ENCODE measurements at regions of chr12 and their contacts with region 1.

Region 1: DNA sequence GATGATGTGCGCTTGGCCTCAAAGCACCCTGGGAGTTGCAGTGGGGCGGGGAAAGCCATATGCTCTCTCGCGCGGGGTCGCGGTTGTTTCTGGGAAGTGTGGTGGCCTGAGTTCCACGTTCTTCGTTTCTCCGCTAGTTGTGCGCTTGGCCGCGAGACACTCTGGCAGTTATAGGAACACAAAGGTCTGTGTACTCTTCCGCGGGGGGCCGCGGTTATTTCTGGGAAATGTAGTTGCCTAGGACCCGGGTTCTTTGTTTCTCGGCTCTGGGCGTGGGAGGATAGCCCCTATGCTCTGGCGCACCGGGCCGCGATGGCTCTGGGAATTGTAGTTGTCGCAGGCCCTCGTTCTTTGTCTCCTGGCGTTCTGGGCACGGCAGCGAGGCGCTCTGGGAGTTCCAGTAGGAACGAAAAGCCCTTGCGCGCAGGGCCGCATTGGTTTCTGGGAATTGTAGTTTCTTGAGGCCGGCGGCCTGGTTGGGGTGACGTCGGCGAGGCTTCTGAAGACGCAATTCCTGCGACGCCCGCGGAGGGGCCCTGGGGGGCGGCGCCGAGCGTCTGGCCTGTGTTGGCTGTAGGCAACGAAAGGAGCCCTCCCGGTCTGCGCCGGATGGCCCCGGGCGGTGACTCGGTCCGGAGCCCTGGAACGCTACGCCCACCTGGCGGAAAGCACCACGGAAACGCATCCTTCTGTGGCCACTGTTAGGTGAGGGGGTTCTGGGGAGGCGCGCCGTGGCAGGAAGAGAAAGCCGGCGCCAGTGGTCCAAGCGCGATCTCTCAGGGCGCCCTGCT is at the start of gene ZNF140:
- DNase-seq: peak; percentile 94
- ATAC-seq: peak; percentile 84
- H3K4me3 ChIP-seq: peak within 1 kb of the TSS; percentile 93 to 96 (median 95)
- H3K27ac ChIP-seq: peak within 1 kb of the TSS; percentile 98
- H3K4me1 ChIP-seq: peaks cover 14% of the 10 kb centered on the region
- H3K27me3 ChIP-seq: no peaks in the 10 kb centered on the region
- CTCF ChIP-seq: no peak; the same call in 1 of the 2 replicates
- EP300 ChIP-seq: no peak
- POLR2A ChIP-seq: peak; percentile 24 to 80
- RAD21 ChIP-seq: peak; percentile 47
- total RNA-seq, gene ZNF140: 13.5 and 20.7 TPM in 2 replicates

Region 2: GRCh38 chr12:132986001-132986912 is 94.3 kb before region 1 on chr12 and contains the start of gene ZNF26:
- CTCF ChIA-PET with region 1: no interaction called
- POLR2A ChIA-PET with region 1: interaction called, 25 read pairs
- in situ Hi-C with region 1: no loop called
- intact Hi-C with region 1: loop called (anchors 2 kb)
- DNase-seq: peak; percentile 90
- ATAC-seq: peak; percentile 98
- H3K4me3 ChIP-seq: peak within 1 kb of the TSS; percentile 83 to 99 (median 96)
- H3K27ac ChIP-seq: peak within 1 kb of the TSS; percentile 60
- H3K4me1 ChIP-seq: peaks cover 17% of the 10 kb centered on the region
- H3K27me3 ChIP-seq: no peaks in the 10 kb centered on the region; a peak in 1 of 5 replicates
- CTCF ChIP-seq: peak; percentile 35; the same call in 1 of the 2 replicates
- EP300 ChIP-seq: 0 out of 4 replicates have a peak, but pooled peaks of 1 of the 2 experiments have one; percentile 57
- POLR2A ChIP-seq: peak; percentile 85 to 89
- RAD21 ChIP-seq: peak; percentile 25; the same call in 1 of the 2 replicates
- total RNA-seq, gene ZNF26: 6.5 and 8.4 TPM in 2 replicates

Region 3: DNA sequence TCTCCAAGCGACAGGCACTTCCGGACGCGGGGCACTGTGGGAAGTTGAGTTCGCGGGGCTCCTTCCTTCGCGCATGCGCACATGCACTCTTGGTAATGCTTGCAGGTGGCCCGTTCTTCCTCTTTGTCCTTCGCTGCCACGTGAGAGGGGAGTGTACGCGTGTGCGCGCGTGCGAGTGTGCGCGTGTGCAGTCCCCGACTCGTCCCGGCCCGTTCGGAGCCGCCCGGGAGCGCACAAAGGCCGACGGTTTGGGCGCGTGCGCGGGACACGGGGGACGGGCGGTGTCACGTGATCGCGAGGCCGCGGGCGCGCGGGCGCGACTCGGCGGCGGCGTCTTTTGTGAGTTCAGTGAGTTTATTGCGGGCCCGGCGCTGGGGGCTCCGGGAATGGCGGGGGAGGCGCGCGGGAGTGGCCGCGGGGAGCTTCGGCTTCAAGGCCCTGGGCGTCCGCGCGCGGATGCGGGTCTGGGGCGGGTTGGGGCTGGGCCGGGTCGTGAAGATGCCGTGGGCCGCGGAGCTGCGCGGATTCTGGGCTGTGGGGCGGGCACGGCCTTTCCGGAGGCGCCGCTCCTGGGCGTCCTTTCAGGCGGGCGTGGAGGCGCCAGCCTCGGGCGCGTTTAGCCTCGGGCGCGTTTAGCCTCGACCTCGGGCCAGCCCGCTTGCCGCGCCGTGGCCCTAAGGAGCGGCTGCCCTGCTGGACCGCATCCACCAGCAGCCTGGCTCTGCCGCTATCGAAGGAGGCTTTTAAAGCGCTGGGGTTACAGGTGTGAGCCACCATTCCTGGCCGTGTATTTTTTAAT is 43.2 kb before region 1 on chr12 and contains the start of gene ZNF84:
- CTCF ChIA-PET with region 1: no interaction called
- POLR2A ChIA-PET with region 1: interaction called, 5 read pairs
- in situ Hi-C with region 1: no loop called
- intact Hi-C with region 1: loop called (anchors 1 kb)
- DNase-seq: peak; percentile 97
- ATAC-seq: peak; percentile 97
- H3K4me3 ChIP-seq: peak within 1 kb of the TSS; percentile 78 to 94 (median 81)
- H3K27ac ChIP-seq: peak within 1 kb of the TSS; percentile 97
- H3K4me1 ChIP-seq: no peaks in the 10 kb centered on the region
- H3K27me3 ChIP-seq: no peaks in the 10 kb centered on the region
- CTCF ChIP-seq: no peak
- EP300 ChIP-seq: no peak
- POLR2A ChIP-seq: peak; percentile 59 to 68; a peak in 3 of 4 replicates
- RAD21 ChIP-seq: peak; percentile 38; the same call in 1 of the 2 replicates
- total RNA-seq, gene ZNF84: 21.2 and 21.8 TPM in 2 replicates

Region 4: DNA sequence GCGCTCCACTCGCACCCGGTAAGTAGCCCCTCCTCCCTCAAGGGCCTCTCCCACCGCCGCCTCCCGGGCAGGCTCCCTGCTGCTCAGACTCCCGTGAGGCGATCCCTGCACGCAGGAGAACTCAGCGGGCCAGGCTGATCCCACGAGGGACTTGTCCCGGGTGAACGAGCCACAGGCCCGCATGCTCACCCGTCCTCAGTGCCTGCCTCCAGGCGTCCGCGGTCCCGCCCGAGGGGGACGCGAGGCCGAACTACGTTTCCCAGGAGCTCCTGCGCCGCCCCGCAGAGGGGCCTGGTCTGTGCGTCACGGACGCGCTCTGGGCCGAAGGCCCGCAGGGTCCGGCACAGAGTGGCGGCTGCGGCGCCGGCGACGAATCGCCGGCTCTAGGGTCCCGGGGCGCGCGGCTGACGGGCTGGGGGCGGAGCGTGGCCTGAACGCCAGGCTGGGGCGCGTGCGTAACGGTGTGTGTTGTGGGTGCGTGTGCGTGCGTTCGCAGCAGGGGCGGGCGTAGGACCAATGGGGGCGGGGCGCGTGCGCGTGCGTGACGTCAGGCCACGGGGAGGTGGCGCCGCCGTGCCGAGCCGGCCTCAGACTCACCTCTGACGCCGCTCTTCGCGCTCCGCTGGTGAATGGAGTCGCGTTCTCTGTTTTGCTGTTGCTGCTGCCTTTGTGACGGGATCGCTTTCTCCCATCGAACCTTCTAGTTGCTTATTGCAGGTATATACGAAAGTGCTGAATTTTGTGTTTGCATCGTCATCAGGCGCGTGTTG is 49.7 kb after region 1 on chr12 and contains the starts of genes ZNF10 and ZNF891:
- CTCF ChIA-PET with region 1: no interaction called
- POLR2A ChIA-PET with region 1: interaction called, 25 read pairs
- in situ Hi-C with region 1: no loop called
- intact Hi-C with region 1: loop called (anchors 1 kb)
- DNase-seq: peak; percentile 90
- ATAC-seq: peak; percentile 99
- H3K4me3 ChIP-seq: peak within 1 kb of the TSS; percentile 83 to 99 (median 96)
- H3K27ac ChIP-seq: peak within 1 kb of the TSS; percentile 90
- H3K4me1 ChIP-seq: peaks cover 10% of the 10 kb centered on the region
- H3K27me3 ChIP-seq: no peaks in the 10 kb centered on the region; a peak in 1 of 5 replicates
- CTCF ChIP-seq: peak; percentile 33; the same call in 1 of the 2 replicates
- EP300 ChIP-seq: 0 out of 4 replicates have a peak, but pooled peaks of 1 of the 2 experiments have one; percentile 6
- POLR2A ChIP-seq: peak; percentile 94 to 95
- RAD21 ChIP-seq: peak; percentile 23; the same call in 1 of the 2 replicates
- total RNA-seq, gene ZNF10: 6.5 and 8.9 TPM in 2 replicates
- total RNA-seq, gene ZNF891: 1.8 and 2.1 TPM in 2 replicates

Region 5: DNA sequence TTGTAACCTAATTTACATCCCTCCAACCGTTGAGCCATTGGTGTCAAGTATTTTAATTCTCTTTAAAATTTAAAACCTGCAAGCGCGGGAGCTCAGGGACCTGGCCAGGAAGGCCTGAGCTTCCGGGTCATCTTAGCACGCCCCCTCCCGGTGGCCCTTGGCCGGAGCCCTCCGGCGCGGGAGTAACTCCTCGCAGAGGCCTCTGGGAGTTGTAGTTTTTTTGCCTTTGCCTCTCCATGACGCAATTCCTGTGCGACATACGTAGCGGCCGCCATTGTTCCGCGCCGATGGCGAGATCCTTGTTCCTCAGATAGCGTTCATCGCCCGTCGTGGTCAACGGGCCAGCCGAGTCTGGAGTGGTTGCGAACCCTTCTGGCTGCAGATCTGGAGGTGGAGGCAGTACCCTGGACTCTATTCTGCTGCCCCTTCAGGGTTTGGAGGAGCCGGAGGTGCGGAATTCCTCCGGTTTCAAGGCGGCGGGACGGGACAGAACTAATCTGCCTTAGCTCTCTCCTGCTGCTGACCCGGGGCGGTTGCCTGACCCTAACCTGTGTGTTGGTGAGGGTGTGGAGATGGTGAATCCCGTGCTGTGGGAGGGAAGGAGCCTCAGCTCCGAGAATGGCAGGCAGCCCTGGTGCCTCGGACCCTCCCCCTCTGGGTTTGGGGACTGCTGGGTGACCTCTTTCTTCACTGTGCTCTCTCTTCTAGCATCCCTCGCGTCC is 100.8 kb after region 1 on chr12 and contains the start of gene ZNF268:
- CTCF ChIA-PET with region 1: interaction called, 10 read pairs
- POLR2A ChIA-PET with region 1: interaction called, 18 read pairs
- in situ Hi-C with region 1: no loop called
- intact Hi-C with region 1: loop called (anchors 1 kb)
- DNase-seq: peak; percentile 88
- ATAC-seq: peak; percentile 97
- H3K4me3 ChIP-seq: peak within 1 kb of the TSS; percentile 89 to 99 (median 96)
- H3K27ac ChIP-seq: peak within 1 kb of the TSS; percentile 72
- H3K4me1 ChIP-seq: peaks cover 9% of the 10 kb centered on the region; the same call in 1 of the 2 replicates
- H3K27me3 ChIP-seq: no peaks in the 10 kb centered on the region; a peak in 1 of 5 replicates
- CTCF ChIP-seq: peak; percentile 88
- EP300 ChIP-seq: no peak
- POLR2A ChIP-seq: peak; percentile 72 to 84
- RAD21 ChIP-seq: peak; percentile 75
- total RNA-seq, gene ZNF268: 31.3 and 54.4 TPM in 2 replicates

Measured in HepG2 (cell line).